ENCODE measurements at regions of chr4 and their contacts with region 1.

Region 1: GRCh38 chr4:108168671-108169523 is at the start of gene LEF1:
- DNase-seq: peak; percentile 63
- H3K4me3 Mint-ChIP-seq: peak within 1 kb of the TSS; percentile 96
- H3K27ac Mint-ChIP-seq: peak within 1 kb of the TSS; percentile 80
- H3K4me1 Mint-ChIP-seq: peaks cover 57% of the 10 kb centered on the region
- H3K27me3 Mint-ChIP-seq: peaks cover 40% of the 10 kb centered on the region
- total RNA-seq, gene LEF1: 67.4 to 68.2 TPM

Region 2: DNA sequence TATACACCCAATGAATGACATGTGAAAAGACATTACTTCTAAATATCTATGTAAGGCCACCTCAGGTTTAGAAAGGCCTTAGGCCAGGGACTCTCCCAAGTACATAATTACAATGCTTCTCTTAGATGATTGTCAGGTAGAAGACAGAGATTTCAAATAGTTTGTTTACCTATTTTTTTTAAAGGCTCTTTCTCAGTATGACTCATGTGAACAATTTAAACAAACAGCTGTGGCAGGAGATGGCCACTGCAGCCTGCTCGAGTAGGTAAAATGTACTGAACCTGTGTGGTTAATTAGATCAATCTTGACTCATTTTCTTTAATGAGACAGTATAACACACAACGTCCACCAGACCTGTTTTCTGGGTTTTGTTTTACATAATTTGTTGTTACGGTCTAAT is 50.4 kb before region 1 on chr4:
- CTCF ChIA-PET with region 1: interaction called, 7 read pairs
- POLR2A ChIA-PET with region 1: interaction called, 38 read pairs
- DNase-seq: peak; percentile 49
- H3K4me3 Mint-ChIP-seq: peak overlapping the region; percentile 39
- H3K27ac Mint-ChIP-seq: peak overlapping the region; percentile 72
- H3K4me1 Mint-ChIP-seq: peaks cover 73% of the 10 kb centered on the region
- H3K27me3 Mint-ChIP-seq: no peaks in the 10 kb centered on the region

Region 3: GRCh38 chr4:108261026-108261425 is 92.1 kb after region 1 on chr4:
- CTCF ChIA-PET with region 1: no interaction called
- POLR2A ChIA-PET with region 1: no interaction called
- DNase-seq: no peak
- H3K4me3 Mint-ChIP-seq: no peak overlapping the region
- H3K27ac Mint-ChIP-seq: no peak overlapping the region
- H3K4me1 Mint-ChIP-seq: no peaks in the 10 kb centered on the region
- H3K27me3 Mint-ChIP-seq: no peaks in the 10 kb centered on the region

Region 4: GRCh38 chr4:108502356-108502755 is 333.5 kb after region 1 on chr4:
- CTCF ChIA-PET with region 1: no interaction called
- POLR2A ChIA-PET with region 1: no interaction called
- DNase-seq: no peak
- H3K4me3 Mint-ChIP-seq: no peak overlapping the region
- H3K27ac Mint-ChIP-seq: no peak overlapping the region
- H3K4me1 Mint-ChIP-seq: no peaks in the 10 kb centered on the region
- H3K27me3 Mint-ChIP-seq: peaks cover 7% of the 10 kb centered on the region

Measured in activated CD4-positive, alpha-beta memory T cell treated with anti-CD3 and anti-CD28 coated beads, Interleukin-2, amount 10 ng/mL, durations not matched to agents 7 days and 5 days (primary cell).